HEK293 (cell line): ENCODE measurements at regions of chr1 and their contacts with region 1.

Region 1: DNA sequence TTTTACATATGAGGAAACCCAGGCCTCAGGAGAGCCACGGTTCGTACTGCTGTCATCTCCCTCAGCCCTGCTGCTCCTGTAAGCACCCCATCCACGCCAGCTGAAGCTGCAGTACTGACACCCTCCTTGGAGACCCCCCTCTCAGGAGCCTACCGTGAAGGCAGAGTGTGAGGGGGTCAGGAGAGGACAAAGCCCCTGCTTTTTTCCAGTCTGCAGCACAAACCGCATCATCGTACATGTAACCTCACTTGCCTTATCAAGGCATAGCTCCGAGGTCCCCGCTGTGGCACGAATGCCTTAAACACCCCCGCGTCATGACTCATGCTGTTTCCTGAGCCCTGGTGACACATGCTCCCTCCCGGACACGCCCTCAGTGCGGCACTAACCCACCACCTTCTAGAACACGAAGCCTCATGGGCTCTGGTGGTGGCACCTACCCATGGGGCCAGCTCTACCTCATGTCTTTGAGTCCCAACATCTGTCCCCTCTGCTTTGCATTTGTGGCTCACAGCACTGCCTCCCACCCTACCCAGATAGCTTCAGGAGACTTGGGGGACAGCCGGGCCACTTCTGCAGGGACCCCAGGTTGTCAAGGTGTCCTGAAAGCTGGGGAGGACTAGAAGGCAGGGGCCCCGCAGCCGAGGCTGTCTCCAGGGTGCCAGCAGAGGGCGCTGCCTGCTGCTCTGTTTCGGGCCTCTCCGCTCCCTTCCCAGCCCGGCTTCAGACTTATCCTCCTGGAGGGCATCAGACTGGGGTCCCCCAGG is 4.9 kb downstream of the SH3BGRL3 start:
- H3K4me3 ChIP-seq: no peak overlapping the region
- H3K27ac ChIP-seq: no peak overlapping the region
- H3K4me1 ChIP-seq: no peaks in the 10 kb centered on the region
- CTCF ChIP-seq: peak; percentile 70

Region 2: GRCh38 chr1:25799935-25800702 is 484.7 kb before region 1 on chr1 and contains the start of gene SELENON:
- CTCF ChIA-PET with region 1: no interaction called
- POLR2A ChIA-PET with region 1: no interaction called
- H3K4me3 ChIP-seq: peak within 1 kb of the TSS; percentile 60
- H3K27ac ChIP-seq: peak within 1 kb of the TSS; percentile 51; the same call in 1 of the 2 replicates
- H3K4me1 ChIP-seq: peaks cover 2% of the 10 kb centered on the region; the same call in 1 of the 2 replicates
- CTCF ChIP-seq: no peak

Region 3: DNA sequence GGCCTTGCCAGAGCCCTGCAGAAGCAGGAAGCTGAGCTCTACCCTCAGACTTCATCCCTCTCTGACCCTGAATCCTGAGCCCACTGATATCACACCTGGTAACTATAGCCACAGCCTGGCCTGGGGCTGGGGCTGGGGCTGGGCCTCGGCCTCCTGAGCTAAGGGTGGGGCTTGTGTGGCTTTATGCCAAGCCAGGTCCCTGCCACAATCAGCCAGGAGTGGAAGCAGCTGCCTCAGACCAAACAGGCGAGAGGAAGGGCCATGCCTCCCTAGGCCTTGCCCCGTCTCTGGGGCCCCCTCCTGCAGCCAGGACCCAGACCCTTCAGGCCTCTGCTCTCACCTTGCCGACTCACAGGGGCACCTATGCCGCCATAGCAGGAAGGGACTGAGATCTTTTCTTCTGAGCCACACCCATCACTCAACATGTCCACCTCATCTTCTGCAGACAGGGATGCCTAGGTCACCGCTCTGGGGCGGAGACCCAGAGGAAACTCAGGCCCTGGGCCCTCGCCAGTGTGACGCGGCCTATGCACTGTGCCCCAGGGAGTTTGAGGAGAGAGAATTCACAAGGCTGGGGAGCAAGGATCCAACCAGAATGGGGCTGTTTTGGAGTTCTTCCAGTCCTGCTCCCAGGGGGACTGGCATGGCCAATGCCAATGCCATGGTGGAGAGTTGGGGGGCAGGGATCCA is 16.0 kb after region 1 on chr1:
- CTCF ChIA-PET with region 1: interaction called, 39 read pairs
- POLR2A ChIA-PET with region 1: interaction called, 3 read pairs
- H3K4me3 ChIP-seq: no peak overlapping the region
- H3K27ac ChIP-seq: no peak overlapping the region
- H3K4me1 ChIP-seq: no peaks in the 10 kb centered on the region
- CTCF ChIP-seq: no peak

Region 4: DNA sequence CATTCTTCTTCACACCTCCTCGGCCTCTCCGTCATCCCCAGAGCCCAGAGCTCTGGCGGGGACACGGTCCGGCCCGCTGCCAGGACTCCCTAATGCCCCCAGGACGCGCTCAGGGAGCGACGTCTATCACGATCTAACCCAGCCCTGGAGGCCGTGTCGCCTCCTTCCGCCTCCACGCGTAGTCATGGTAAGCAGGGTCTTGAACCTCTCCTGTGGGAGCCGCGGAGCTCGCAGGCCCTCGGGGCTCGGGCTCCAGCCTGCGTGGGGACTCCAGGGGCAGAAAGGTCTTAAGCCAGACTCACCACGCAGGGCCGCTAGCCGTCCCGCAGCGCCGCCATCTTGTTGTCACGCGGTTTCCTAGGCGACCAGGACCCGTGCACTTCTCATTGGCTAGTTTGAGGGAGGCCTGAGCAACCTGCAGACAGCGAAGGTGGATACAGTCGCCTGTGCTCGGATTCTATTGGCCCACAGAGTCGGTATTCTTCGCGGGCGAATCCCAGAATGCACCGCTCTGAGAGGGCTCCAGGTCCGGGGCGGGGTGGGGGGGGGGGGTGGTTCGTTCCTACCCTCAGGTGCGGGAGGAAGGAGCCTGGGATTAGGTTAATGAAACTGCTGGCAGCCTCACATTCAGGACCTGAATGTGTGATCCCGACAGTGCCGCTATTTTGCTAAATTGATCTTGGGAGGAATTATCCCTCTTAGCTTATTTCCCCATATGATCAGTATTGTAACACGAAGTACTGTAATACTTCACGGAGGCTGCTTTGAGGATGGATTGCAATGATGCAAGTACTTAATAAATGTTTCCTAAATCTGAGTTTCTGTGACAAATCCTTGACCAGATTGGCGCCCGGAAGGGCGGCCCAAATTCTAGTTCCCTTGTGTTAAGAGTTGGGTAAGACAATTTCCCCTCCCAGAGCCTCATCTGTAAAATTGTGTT is 21.8 kb after region 1 on chr1 and contains the start of gene UBXN11:
- CTCF ChIA-PET with region 1: interaction called, 39 read pairs
- POLR2A ChIA-PET with region 1: interaction called, 4 read pairs
- H3K4me3 ChIP-seq: peak within 1 kb of the TSS; percentile 94
- H3K27ac ChIP-seq: no peak within 1 kb of the TSS
- H3K4me1 ChIP-seq: no peaks in the 10 kb centered on the region
- CTCF ChIP-seq: peak; percentile 32; the same call in 1 of the 2 replicates

Region 5: DNA sequence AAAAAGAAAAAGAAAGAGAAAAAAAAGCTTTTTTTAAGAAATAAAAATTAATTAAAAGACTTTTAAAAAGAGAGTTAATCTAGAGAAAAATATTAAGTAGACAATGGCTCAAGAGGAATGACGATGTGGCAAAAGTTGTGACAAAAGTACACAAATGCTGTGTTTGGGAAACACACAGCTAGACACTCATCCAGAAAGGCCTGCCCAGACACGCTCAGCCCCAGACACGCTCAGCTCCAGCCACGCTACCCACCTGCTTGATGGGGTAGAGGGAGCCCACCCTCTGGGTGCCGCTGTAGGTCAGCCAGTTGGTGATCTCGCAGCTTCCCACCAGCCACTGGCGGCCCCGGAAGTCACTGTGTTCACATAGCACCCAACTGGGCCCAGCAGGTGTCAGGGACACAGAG is 43.2 kb after region 1 on chr1:
- CTCF ChIA-PET with region 1: interaction called, 203 read pairs
- POLR2A ChIA-PET with region 1: interaction called, 10 read pairs
- H3K4me3 ChIP-seq: no peak overlapping the region
- H3K27ac ChIP-seq: no peak overlapping the region; the same call in 1 of the 2 replicates
- H3K4me1 ChIP-seq: no peaks in the 10 kb centered on the region
- CTCF ChIP-seq: peak; percentile 50

Region 6: DNA sequence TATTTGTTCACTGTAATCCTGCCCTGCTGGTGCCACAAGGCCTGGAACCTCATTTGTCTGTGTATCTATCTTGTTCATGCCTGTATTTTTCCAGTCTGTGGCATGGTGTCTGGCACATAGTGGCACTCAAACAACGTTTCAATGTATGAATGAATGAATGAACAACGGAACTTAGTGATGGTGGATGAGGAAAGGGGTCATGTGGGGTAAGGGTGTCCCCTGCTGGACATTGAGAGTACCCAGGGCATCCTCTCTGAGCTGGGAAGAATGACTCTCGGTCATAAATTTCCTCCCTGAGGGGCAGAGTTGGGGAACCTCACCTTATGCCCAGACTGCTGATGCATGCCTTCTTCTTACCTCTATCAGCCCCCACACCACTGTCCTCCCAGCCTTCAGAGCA is 106.7 kb after region 1 on chr1:
- CTCF ChIA-PET with region 1: interaction called, 13 read pairs
- POLR2A ChIA-PET with region 1: no interaction called
- H3K4me3 ChIP-seq: no peak overlapping the region
- H3K27ac ChIP-seq: no peak overlapping the region
- H3K4me1 ChIP-seq: no peaks in the 10 kb centered on the region
- CTCF ChIP-seq: peak; percentile 70